Psoas muscle (tissue), 8 donors: ENCODE measurements at regions of chr11 and their contacts with region 1.

Region 1: GRCh38 chr11:112219476-112220232 is 6.6 kb upstream of the PTS start:
- DNase-seq: no peak
- ATAC-seq: peak; percentile 93 to 98 (median 96)
- H3K4me3 ChIP-seq: no peak overlapping the region
- H3K27ac ChIP-seq: no peak overlapping the region
- H3K4me1 ChIP-seq: no peaks in the 10 kb centered on the region
- H3K27me3 ChIP-seq: no peaks in the 10 kb centered on the region
- CTCF ChIP-seq: peak; percentile 76

Region 2: GRCh38 chr11:112231952-112232351 is 12.3 kb after region 1 on chr11:
- intact Hi-C with region 1: loop called in 1 of 2 experiments (anchors 2 kb)
- DNase-seq: no peak
- ATAC-seq: no peak
- H3K4me3 ChIP-seq: no peak overlapping the region
- H3K27ac ChIP-seq: no peak overlapping the region
- H3K4me1 ChIP-seq: peaks cover 13% of the 10 kb centered on the region
- H3K27me3 ChIP-seq: no peaks in the 10 kb centered on the region
- CTCF ChIP-seq: no peak

Region 3: GRCh38 chr11:112555491-112556364 is 336.1 kb after region 1 on chr11:
- intact Hi-C with region 1: loop called (anchors 5 to 10 kb)
- DNase-seq: peak; percentile 54 to 79
- ATAC-seq: peak; percentile 80 to 97 (median 91)
- H3K4me3 ChIP-seq: no peak overlapping the region
- H3K27ac ChIP-seq: no peak overlapping the region
- H3K4me1 ChIP-seq: no peaks in the 10 kb centered on the region
- H3K27me3 ChIP-seq: no peaks in the 10 kb centered on the region
- CTCF ChIP-seq: peak; percentile 74

Region 4: DNA sequence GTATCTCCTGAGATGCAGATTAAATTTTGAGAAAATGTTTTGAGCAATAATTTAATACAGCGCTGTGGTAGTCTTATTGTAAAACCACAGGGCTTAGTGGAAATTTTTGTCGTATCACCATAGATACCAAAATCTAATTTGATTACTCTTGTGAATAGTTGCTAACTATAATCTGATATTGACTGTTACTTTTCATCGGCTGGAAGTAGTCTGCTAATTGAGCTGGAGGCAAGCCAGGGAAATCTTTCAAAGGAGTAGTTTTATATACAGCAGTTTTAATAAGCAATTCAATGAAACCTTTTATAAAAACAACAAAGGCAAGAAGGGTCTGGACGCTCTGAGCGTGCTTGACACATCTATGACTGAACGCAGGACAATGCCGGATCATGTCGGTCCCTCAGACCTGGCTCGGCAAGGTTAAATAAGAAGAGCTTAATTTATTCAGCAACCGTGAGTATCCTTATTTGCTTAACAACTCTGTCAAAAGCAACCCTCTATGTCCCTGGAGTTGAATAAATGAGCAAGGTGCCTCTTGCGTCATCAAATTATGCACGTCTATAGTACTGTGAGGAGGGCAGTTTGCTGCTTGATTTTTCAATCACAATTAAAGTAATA is 862.8 kb after region 1 on chr11:
- intact Hi-C with region 1: no loop called
- DNase-seq: no peak
- ATAC-seq: no peak
- H3K4me3 ChIP-seq: no peak overlapping the region
- H3K27ac ChIP-seq: no peak overlapping the region
- H3K4me1 ChIP-seq: no peaks in the 10 kb centered on the region
- H3K27me3 ChIP-seq: no peaks in the 10 kb centered on the region
- CTCF ChIP-seq: no peak